Calu3 (cell line): ENCODE measurements at regions of chr10 and their contacts with region 1.

Region 1: GRCh38 chr10:113563306-113564088 is 10.6 kb downstream of the HABP2 start:
- DNase-seq: peak; percentile 73
- H3K4me3 Mint-ChIP-seq: peak overlapping the region; percentile 73
- H3K27ac Mint-ChIP-seq: no peak overlapping the region
- H3K4me1 Mint-ChIP-seq: peaks cover 8% of the 10 kb centered on the region
- H3K27me3 Mint-ChIP-seq: peaks cover 58% of the 10 kb centered on the region
- CTCF ChIP-seq: peak; percentile 89

Region 2: GRCh38 chr10:113441220-113441619 is 122.3 kb before region 1 on chr10:
- CTCF ChIA-PET with region 1: no interaction called
- intact Hi-C with region 1: loop called (anchors 10 kb)
- DNase-seq: no peak
- H3K4me3 Mint-ChIP-seq: no peak overlapping the region
- H3K27ac Mint-ChIP-seq: no peak overlapping the region
- H3K4me1 Mint-ChIP-seq: no peaks in the 10 kb centered on the region
- H3K27me3 Mint-ChIP-seq: peaks cover 64% of the 10 kb centered on the region
- CTCF ChIP-seq: no peak

Region 3: DNA sequence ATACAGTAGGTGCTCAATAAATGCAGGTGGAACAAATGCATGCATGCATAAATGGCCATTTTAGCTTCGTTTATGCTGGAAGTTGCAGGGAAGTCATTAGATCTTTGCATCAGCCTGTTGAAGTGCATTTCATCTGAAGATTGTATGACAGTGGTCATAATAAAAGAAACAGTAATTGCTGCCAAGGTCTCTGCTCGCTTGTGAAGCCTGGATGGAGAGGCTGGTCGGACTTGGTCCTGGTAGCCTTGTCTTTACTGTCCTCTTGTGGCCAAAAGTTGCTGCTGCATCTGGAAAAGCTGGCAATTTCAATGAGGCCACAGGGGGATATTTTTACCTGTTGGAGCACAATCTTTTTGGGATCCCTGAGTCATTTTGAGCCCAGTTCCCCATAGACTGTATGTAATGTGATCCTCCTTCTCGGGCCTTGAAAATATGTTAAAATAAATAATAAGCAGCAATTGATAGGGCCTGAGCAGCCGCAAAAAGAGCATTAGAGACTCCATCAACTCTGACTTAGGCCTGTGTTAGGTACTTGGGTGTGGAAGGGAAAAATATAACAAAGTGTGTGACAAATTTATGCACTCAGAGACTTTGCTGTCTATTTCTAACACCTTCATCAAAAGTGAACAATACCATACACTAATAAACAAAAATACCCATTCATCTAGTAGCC is 42.2 kb before region 1 on chr10:
- CTCF ChIA-PET with region 1: interaction called, 5 read pairs
- intact Hi-C with region 1: loop called (anchors 1 kb)
- DNase-seq: peak; percentile 54
- H3K4me3 Mint-ChIP-seq: no peak overlapping the region
- H3K27ac Mint-ChIP-seq: no peak overlapping the region
- H3K4me1 Mint-ChIP-seq: no peaks in the 10 kb centered on the region
- H3K27me3 Mint-ChIP-seq: peaks cover 52% of the 10 kb centered on the region
- CTCF ChIP-seq: peak; percentile 71

Region 4: DNA sequence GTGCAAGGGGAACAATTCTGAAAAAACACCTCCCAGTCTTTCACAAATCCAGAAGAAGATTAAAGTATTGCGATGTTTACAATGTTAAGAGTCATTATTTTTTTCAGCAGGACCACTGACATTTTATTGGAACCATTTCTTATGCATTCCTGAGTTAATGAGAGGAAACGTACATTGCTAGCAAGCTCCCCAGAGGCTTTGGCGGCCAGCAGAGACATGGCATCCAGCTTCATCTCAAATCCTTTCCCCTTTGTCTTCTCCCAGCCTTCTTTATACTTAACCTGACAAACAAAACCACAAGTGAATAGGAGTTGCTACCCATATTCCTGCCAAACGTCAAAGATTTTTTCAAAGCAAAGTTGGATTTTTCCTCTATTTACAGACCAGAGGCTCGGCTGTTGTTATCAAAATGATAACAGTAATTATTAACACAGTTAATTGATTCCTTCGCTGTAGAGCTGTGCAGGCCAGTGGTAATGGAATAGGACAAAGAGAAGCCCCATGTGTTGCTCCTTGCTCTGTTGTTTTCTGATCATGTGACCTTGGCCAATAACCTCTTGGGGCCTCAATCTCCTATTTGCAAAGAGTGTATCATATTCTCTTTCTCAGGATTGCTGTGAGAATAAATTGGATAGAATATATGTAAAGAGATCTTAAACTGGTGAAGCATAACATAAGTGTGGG is 68.3 kb after region 1 on chr10:
- CTCF ChIA-PET with region 1: no interaction called
- intact Hi-C with region 1: no loop called
- DNase-seq: no peak
- H3K4me3 Mint-ChIP-seq: no peak overlapping the region
- H3K27ac Mint-ChIP-seq: no peak overlapping the region
- H3K4me1 Mint-ChIP-seq: no peaks in the 10 kb centered on the region
- H3K27me3 Mint-ChIP-seq: peaks cover 59% of the 10 kb centered on the region
- CTCF ChIP-seq: no peak